ENCODE measurements at regions of chr22 and their contacts with region 1.

Region 1: DNA sequence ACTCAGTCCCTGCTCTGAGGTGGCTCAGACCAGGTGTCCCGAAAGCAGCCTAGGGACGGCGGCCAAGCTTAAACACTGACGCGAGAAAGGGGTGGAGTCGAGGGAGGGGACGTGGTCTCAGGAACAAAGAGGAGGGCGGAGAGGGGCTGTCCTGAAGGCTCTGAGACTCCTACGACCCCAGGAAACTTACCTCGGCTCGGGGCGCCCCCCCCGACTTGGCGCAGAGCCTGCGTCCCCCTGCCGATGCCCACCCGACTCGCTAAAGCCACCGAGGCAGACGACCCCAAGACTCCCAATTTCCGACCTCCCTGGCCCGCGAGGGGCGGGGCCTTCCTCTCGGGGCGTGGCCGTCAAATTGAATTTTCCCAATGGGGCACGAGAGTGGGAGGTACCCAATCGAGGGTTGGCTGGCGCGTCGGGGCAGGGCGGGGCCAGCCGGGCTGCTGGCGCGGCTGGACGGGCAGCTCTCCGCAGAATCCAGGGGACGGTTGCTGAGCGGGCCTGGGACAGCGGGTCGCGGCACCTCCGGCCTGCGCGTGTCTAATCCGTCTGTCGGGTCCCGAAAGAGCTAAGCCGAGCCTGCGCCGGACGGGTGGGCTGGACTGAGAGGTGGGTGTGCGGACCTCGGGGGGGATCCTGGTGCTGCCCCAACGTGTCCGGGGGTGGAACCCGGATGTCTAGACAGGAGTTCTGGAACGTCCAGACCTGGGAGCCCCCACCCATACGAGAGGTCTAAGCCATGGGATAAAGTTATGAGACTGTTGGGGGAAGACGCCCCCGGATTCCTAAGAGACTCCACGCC is at the start of gene SMTN:
- DNase-seq: peak; percentile 94 to 95
- ATAC-seq: peak; percentile 80 to 88 (median 84)
- H3K4me3 ChIP-seq: peak within 1 kb of the TSS; percentile 55 to 91 (median 74)
- H3K27ac ChIP-seq: peak within 1 kb of the TSS; percentile 78 to 98 (median 96)
- H3K4me1 ChIP-seq: peaks cover 16 to 56% (median 42%) of the 10 kb centered on the region in 9 donors
- H3K27me3 ChIP-seq: no peaks in the 10 kb centered on the region
- CTCF ChIP-seq: no peak
- total RNA-seq, gene SMTN: 146 to 290 (median 204) TPM

Region 2: DNA sequence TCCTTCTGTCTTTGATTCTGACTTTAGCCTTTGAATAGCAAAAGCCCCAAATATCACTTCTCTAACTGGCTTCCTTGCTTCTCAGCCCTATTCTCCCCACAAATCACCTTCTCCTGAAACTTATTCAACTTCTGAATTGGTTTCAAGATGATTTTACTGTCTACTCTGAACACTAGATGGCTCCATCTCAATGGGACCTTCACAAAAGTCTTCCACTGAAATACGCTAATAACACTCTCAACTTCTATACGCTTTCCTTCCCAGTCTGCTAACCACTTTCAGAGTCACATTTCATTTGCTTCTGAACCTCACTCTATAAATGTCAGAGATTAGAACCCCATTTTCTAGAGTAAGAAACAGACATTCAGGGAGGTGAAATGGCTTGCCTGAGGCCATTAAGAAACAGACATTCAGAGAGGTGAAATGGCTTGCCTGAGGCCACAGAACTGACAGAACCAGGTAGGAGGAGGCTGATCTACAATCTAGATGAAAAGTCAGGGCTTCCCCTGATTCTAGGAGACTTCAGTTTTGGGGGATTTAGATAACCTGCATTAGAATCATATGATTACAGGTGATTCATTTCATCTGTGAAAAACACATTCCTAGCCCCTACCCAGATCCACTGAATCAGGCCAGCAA is 133.1 kb before region 1 on chr22:
- intact Hi-C with region 1: loop called (anchors 1 to 5 kb)
- DNase-seq: peak in 1 of 2 donors; percentile 20
- ATAC-seq: peak in 7 of 8 donors; percentile 65 to 87 (median 77)
- H3K4me3 ChIP-seq: no peak overlapping the region
- H3K27ac ChIP-seq: peak overlapping the region in 8 of 10 donors; percentile 28 to 71 (median 56)
- H3K4me1 ChIP-seq: peaks cover 5 to 30% (median 21%) of the 10 kb centered on the region in 9 donors
- H3K27me3 ChIP-seq: no peaks in the 10 kb centered on the region
- CTCF ChIP-seq: peak; percentile 39 to 82 (median 67)

Region 3: DNA sequence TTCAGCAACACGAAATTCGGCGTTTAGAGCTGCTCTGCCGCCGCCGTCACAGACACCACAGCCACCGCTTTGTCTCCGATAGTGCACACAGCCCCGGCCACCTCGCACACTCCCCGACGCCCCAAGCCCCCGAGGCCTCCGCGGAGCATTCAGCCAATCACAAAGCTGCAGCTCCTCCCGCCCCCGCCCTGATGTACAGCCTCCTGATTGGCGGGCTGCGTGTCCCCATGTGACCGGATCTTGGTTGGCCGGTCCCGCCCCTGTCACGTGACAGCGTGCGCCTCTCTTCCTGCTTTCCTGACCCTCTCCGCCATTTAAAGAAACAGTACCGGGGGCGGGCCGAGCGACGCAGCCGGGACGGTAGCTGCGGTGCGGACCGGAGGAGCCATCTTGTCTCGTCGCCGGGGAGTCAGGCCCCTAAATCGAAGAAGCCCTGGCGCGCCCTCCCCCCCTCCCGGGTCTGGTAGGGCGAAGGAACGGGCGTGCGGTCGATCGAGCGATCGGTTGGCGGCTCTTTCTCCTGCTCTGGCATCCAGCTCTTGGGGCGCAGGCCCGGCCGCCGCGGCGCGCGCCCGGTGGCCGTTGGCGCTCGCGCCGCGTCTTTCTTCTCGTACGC is 112.0 kb before region 1 on chr22 and contains the start of gene TUG1:
- intact Hi-C with region 1: loop called in 9 of 10 experiments (anchors 1 to 5 kb)
- DNase-seq: peak; percentile 98 to 99
- ATAC-seq: peak; percentile 97 to 100 (median 98)
- H3K4me3 ChIP-seq: peak within 1 kb of the TSS; percentile 76 to 91 (median 84)
- H3K27ac ChIP-seq: peak within 1 kb of the TSS; percentile 88 to 99 (median 96)
- H3K4me1 ChIP-seq: peaks cover 4 to 59% (median 39%) of the 10 kb centered on the region in 9 donors
- H3K27me3 ChIP-seq: no peaks in the 10 kb centered on the region
- CTCF ChIP-seq: no peak
- total RNA-seq, gene TUG1: 37.7 to 48.4 (median 44.2) TPM

Region 4: DNA sequence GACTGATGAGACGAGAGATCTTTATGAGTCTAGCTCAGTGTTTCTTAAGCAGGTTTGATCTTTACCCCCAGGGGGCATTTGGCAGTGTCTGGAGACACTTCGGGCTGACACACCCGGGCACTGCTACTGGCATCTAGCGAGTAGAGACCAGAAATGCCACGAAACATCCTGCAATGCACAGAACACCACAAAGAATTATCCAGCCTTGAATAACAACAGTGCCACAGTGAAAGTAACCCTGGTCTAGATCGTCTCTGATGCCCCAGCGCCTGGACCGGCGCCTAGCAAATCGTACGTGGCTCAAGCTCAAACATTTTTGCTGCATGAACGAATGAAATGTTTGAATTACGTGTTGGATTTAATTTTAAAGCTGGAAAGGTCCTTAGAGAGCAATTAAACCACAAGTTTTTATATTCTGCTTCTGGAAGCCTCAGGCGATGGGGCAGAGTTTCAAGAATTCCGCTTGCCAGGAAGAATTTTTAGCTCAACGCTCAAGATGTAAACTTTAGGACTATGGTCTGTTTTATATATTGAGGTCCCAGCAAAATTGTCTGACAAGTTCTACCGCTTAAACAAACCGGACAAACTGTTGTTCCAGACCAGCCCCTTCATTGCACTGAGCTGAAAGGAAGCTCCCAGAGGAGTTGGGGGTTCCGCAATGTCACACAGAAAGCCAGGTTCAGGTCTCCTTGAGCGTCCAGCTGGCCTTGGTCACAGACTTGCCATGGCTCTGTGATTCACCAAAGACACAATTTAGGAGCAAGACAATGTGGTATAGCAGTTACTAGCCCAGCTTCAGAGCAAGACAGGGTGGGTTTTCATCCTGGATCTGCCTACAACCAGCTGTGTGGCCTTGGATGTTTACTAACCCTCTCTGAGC is 44.1 kb before region 1 on chr22:
- intact Hi-C with region 1: loop called in 1 of 10 experiments (anchors 2 kb)
- DNase-seq: no peak
- ATAC-seq: peak in 1 of 8 donors; percentile 12
- H3K4me3 ChIP-seq: peak overlapping the region in 6 of 10 donors; percentile 9 to 26 (median 15)
- H3K27ac ChIP-seq: peak overlapping the region in 9 of 10 donors; percentile 0 to 77 (median 47)
- H3K4me1 ChIP-seq: peaks cover 6 to 36% (median 15%) of the 10 kb centered on the region in 9 donors
- H3K27me3 ChIP-seq: no peaks in the 10 kb centered on the region
- CTCF ChIP-seq: no peak

Region 5: DNA sequence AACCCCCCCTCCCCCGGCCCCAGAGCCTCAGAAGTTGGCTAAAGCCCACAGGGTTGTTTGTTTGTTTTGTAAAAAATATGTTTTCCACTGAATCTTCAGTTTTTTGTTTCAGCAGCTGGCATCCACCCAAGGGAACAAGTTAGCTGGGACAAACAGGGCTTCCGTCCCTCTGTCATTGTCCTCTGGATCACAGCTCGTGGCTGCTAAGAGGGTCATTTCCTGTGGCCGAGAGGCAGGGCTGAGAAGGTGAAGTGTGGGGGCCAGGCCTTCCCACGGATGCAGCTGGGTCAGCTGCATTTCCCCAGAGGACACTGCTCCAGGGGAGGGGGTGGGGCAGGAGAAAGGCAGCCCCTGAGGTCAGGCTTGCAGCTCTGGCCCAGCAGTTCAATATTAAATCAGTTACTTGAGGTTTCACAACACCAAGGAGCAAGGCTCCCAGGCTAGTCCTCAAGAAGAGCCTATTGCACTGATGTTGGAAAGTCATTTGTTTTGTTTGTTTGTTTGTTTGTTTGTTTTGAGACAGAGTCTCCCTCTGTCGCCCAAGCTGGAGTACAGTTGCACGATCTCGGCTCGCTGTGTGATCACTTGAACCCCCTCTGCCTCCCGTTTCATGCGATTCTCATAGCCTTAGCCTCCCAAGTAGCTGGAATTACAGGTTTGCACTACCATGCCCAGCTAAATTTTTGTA is 34.4 kb before region 1 on chr22:
- intact Hi-C with region 1: loop called in 5 of 10 experiments (anchors 2 to 5 kb)
- DNase-seq: peak; percentile 80 to 93
- ATAC-seq: peak; percentile 87 to 96 (median 92)
- H3K4me3 ChIP-seq: peak overlapping the region in 1 of 10 donors; percentile 19
- H3K27ac ChIP-seq: peak overlapping the region; percentile 68 to 91 (median 82)
- H3K4me1 ChIP-seq: peaks cover 14 to 81% (median 58%) of the 10 kb centered on the region in 9 donors
- H3K27me3 ChIP-seq: no peaks in the 10 kb centered on the region
- CTCF ChIP-seq: no peak

Region 6: GRCh38 chr22:31230871-31231621 is 150.0 kb after region 1 on chr22:
- intact Hi-C with region 1: loop called in 2 of 10 experiments (anchors 10 kb)
- DNase-seq: peak in 1 of 2 donors; percentile 57
- ATAC-seq: peak; percentile 65 to 84 (median 78)
- H3K4me3 ChIP-seq: no peak overlapping the region
- H3K27ac ChIP-seq: peak overlapping the region in 9 of 10 donors; percentile 71 to 94 (median 77)
- H3K4me1 ChIP-seq: peaks cover 7 to 100% (median 56%) of the 10 kb centered on the region in 9 donors
- H3K27me3 ChIP-seq: no peaks in the 10 kb centered on the region
- CTCF ChIP-seq: peak; percentile 44 to 85 (median 74)

Measured in heart right ventricle (tissue), 16 donors.